PC-9 (cell line): ENCODE measurements at regions of chr2 and their contacts with region 1.

Region 1: DNA sequence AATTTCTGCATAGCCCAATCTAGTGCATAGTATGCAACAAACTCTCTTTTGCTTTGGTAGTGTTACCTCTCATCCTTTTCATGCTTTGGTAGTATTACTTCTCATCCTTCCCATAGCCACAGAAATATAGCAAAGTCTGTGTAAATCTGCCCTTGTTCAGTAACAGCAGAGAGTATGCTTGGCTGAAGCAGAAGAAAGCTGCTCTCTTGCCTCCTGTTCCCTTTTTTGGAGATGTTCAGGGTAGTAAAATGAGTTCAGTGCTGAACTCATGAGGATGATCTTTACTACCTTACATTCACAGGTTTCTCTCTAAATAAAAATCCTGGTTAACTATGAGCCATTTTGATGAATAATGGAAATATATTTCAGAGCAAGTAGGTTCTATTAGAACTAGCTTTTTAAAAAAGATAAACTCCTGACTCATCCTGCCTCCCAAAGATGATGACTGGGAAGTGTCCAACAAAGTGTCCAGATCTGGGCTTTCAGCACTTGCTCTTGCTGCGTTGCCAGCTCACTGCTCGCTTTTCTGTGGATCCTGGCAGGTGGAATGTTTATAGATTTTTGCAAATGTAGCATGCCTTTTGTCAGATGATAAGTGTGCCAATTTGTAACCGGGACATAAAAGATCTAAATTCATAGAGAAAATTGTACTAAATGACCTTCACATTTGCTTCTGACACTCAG is 29.4 kb upstream of the CHMP3 start:
- DNase-seq: no peak
- H3K4me3 ChIP-seq: no peak overlapping the region
- H3K27ac ChIP-seq: no peak overlapping the region
- H3K4me1 ChIP-seq: no peaks in the 10 kb centered on the region
- H3K27me3 ChIP-seq: no peaks in the 10 kb centered on the region
- CTCF ChIP-seq: no peak

Region 2: DNA sequence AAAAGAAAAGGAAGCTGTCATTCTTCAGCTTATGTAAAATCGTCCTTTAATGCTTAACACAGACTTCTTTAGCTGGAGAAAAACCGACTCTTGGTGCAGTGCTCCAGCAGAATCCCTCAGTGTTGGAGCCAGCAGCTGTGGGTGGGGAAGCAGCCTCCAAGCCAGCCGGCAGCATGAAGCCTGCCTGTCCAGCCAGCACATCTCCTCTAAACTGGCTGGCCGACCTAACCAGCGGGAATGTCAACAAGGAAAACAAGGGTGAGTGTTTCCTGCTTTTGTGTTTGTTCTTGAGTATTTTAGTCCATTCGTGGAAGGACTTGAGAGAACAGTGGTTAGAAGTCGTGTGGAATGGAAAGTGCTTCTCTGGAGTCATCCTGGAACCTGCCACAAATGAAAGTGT is 112.6 kb before region 1 on chr2:
- CTCF ChIA-PET with region 1: no interaction called
- POLR2A ChIA-PET with region 1: no interaction called
- intact Hi-C with region 1: no loop called
- DNase-seq: no peak
- H3K4me3 ChIP-seq: no peak overlapping the region
- H3K27ac ChIP-seq: no peak overlapping the region
- H3K4me1 ChIP-seq: no peaks in the 10 kb centered on the region
- H3K27me3 ChIP-seq: no peaks in the 10 kb centered on the region
- CTCF ChIP-seq: no peak

Region 3: GRCh38 chr2:88296247-88296646 is 1703.6 kb after region 1 on chr2:
- CTCF ChIA-PET with region 1: no interaction called
- POLR2A ChIA-PET with region 1: interaction called, 12 read pairs
- intact Hi-C with region 1: no loop called
- DNase-seq: no peak
- H3K4me3 ChIP-seq: no peak overlapping the region
- H3K27ac ChIP-seq: no peak overlapping the region
- H3K4me1 ChIP-seq: no peaks in the 10 kb centered on the region
- H3K27me3 ChIP-seq: peaks cover 62% of the 10 kb centered on the region
- CTCF ChIP-seq: no peak